ENCODE measurements at regions of chr14 and their contacts with region 1.

Region 1: GRCh38 chr14:73295198-73295796 is 58.0 kb downstream of the PAPLN start:
- DNase-seq: no peak
- H3K4me3 Mint-ChIP-seq: no peak overlapping the region
- H3K27ac Mint-ChIP-seq: no peak overlapping the region
- H3K4me1 Mint-ChIP-seq: peaks cover 22% of the 10 kb centered on the region
- H3K27me3 Mint-ChIP-seq: no peaks in the 10 kb centered on the region

Region 2: GRCh38 chr14:73173092-73173735 is 122.1 kb before region 1 on chr14:
- CTCF ChIA-PET with region 1: interaction called, 11 read pairs
- POLR2A ChIA-PET with region 1: no interaction called
- DNase-seq: no peak
- H3K4me3 Mint-ChIP-seq: no peak overlapping the region
- H3K27ac Mint-ChIP-seq: no peak overlapping the region
- H3K4me1 Mint-ChIP-seq: no peaks in the 10 kb centered on the region
- H3K27me3 Mint-ChIP-seq: no peaks in the 10 kb centered on the region

Region 3: GRCh38 chr14:73283608-73284379 is 11.5 kb before region 1 on chr14:
- CTCF ChIA-PET with region 1: interaction called, 10 read pairs
- POLR2A ChIA-PET with region 1: no interaction called
- DNase-seq: no peak
- H3K4me3 Mint-ChIP-seq: no peak overlapping the region
- H3K27ac Mint-ChIP-seq: no peak overlapping the region
- H3K4me1 Mint-ChIP-seq: peaks cover 7% of the 10 kb centered on the region
- H3K27me3 Mint-ChIP-seq: no peaks in the 10 kb centered on the region

Region 4: GRCh38 chr14:73325630-73326299 is 30.5 kb after region 1 on chr14:
- CTCF ChIA-PET with region 1: interaction called, 10 read pairs
- POLR2A ChIA-PET with region 1: no interaction called
- DNase-seq: peak; percentile 19
- H3K4me3 Mint-ChIP-seq: no peak overlapping the region
- H3K27ac Mint-ChIP-seq: peak overlapping the region; percentile 48
- H3K4me1 Mint-ChIP-seq: peaks cover 22% of the 10 kb centered on the region
- H3K27me3 Mint-ChIP-seq: no peaks in the 10 kb centered on the region

Region 5: DNA sequence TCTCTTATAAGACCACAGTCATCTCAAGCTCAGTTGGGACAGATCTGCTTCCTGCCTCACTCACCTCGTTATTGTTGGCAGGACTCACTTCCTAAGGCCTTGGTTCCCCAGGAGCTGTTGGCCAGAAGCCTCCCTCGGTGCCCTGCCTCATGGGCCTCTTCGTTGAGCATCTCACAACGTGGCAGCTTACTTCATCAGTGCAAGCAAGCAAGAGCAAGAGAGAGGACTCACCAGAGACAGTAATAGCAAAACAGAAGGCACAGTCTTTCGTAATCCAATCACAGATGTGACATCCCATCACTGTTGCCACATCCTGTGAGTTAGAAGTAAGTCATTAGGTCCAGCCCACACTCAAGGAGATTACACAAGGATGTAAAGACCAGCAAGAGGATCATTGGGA is 168.1 kb after region 1 on chr14:
- CTCF ChIA-PET with region 1: interaction called, 22 read pairs
- POLR2A ChIA-PET with region 1: interaction called, 4 read pairs
- DNase-seq: peak; percentile 54
- H3K4me3 Mint-ChIP-seq: peak overlapping the region; percentile 22
- H3K27ac Mint-ChIP-seq: peak overlapping the region; percentile 81
- H3K4me1 Mint-ChIP-seq: peaks cover 60% of the 10 kb centered on the region
- H3K27me3 Mint-ChIP-seq: no peaks in the 10 kb centered on the region

Region 6: DNA sequence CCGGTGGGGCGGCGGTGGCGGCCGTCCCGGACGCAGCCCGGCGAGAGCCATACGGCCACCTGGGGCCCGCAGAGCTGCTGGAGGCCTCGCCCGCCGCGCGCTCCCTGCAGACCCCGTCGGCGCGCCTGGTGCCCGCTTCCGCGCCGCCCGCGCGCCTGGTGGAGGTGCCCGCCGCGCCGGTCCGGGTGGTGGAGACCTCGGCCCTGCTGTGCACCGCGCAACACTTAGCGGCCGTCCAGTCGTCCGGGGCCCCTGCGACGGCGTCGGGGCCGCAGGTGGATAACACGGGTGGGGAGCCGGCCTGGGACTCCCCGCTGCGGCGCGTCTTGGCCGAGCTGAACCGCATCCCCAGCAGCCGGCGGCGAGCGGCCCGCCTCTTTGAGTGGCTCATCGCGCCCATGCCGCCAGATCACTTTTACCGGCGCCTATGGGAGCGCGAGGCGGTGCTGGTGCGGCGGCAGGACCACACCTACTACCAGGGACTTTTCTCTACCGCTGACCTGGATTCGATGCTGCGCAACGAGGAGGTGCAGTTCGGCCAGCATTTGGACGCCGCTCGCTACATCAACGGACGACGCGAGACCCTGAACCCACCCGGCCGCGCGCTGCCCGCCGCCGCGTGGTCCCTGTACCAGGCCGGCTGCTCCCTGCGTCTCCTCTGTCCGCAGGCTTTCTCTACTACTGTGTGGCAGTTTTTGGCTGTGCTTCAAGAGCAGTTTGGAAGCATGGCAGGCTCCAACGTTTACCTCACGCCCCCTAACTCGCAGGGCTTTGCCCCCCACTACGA is 196.2 kb after region 1 on chr14:
- CTCF ChIA-PET with region 1: interaction called, 11 read pairs
- POLR2A ChIA-PET with region 1: interaction called, 7 read pairs
- DNase-seq: peak; percentile 79
- H3K4me3 Mint-ChIP-seq: peak overlapping the region; percentile 81
- H3K27ac Mint-ChIP-seq: peak overlapping the region; percentile 74
- H3K4me1 Mint-ChIP-seq: peaks cover 45% of the 10 kb centered on the region
- H3K27me3 Mint-ChIP-seq: peaks cover 12% of the 10 kb centered on the region

Measured in activated CD4-positive, alpha-beta memory T cell treated with anti-CD3 and anti-CD28 coated beads, Interleukin-2, amount 10 ng/mL, durations not matched to agents 7 days and 5 days (primary cell).